ENCODE measurements at regions of chr2 and their contacts with region 1.

Region 1: DNA sequence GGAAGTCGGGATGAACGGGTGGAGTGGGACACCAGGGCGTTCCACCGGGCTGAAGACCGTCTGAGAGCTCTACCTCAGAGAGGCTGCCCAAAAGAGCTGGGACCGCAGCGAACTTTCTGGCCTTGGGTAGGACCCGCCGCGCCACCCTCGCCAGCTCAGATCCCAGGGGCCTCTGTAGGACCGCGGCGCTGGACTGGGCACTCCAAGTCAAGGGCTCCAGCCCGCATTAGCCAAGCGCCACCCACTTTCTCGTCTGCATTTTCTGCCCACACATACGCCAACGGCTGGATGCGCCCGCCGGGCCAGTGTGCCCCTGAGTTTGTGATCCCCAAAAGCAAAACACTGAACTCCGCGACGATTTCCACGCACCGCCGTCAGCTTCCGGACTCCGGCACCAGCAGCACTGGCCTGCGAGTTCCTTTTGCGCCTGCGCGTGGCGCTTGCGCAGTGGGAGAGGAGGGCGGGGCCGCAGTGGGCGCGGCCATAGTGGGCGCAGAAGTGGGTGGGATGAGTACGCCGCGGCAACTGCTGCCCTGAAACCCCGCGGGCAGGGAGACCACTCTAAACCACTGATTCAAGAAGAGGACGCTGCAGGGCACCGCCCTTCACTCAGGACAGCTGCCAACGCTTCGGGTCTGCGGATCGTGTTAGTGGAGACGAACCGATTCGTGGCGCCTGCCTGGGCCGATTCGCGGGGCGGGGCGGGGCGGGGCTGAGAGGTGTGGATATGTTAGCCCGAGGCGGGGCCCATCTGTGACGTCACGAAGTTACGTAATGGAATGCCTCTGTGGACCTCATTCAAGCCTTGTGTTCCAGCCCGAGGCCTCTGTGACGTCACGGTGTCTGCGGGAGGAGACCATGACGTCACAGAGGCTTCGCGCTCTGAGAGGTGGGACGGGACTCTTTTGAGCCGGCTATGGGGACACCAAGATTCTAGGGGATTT is 10.5 kb downstream of the OSR1 start:
- DNase-seq: peak; percentile 98 to 99
- ATAC-seq: peak; percentile 88 to 96 (median 89)
- H3K4me3 ChIP-seq: peak overlapping the region; percentile 79
- H3K4me3 Mint-ChIP-seq: peak overlapping the region; percentile 96
- H3K27ac ChIP-seq: peak overlapping the region; percentile 84
- H3K27ac Mint-ChIP-seq: peak overlapping the region; percentile 95 to 98
- H3K4me1 ChIP-seq: peaks cover 39% of the 10 kb centered on the region
- H3K4me1 Mint-ChIP-seq: peaks cover 17 to 33% of the 10 kb centered on the region in 2 donors
- H3K27me3 ChIP-seq: peaks cover 39% of the 10 kb centered on the region
- H3K27me3 Mint-ChIP-seq: peaks cover 19 to 28% of the 10 kb centered on the region in 2 donors
- CTCF ChIP-seq: no peak

Region 2: GRCh38 chr2:18560031-18560796 is 787.7 kb before region 1 on chr2 and contains the start of gene RDH14:
- intact Hi-C with region 1: loop called (anchors 1 kb)
- DNase-seq: peak; percentile 84 to 94
- ATAC-seq: peak; percentile 88 to 96 (median 89)
- H3K4me3 ChIP-seq: peak within 1 kb of the TSS; percentile 50
- H3K4me3 Mint-ChIP-seq: peak within 1 kb of the TSS; percentile 91
- H3K27ac ChIP-seq: peak within 1 kb of the TSS; percentile 79
- H3K27ac Mint-ChIP-seq: peak within 1 kb of the TSS; percentile 91 to 93
- H3K4me1 ChIP-seq: peaks cover 12% of the 10 kb centered on the region
- H3K4me1 Mint-ChIP-seq: peaks cover 30 to 34% of the 10 kb centered on the region in 2 donors
- H3K27me3 ChIP-seq: no peaks in the 10 kb centered on the region
- H3K27me3 Mint-ChIP-seq: no peaks in the 10 kb centered on the region
- CTCF ChIP-seq: no peak
- total RNA-seq, gene RDH14: 8.7 to 13.5 (median 12.5) TPM

Region 3: GRCh38 chr2:19120941-19121750 is 226.7 kb before region 1 on chr2:
- intact Hi-C with region 1: no loop called
- DNase-seq: no peak
- ATAC-seq: no peak
- H3K4me3 ChIP-seq: no peak overlapping the region
- H3K4me3 Mint-ChIP-seq: no peak overlapping the region
- H3K27ac ChIP-seq: no peak overlapping the region
- H3K27ac Mint-ChIP-seq: no peak overlapping the region
- H3K4me1 ChIP-seq: no peaks in the 10 kb centered on the region
- H3K4me1 Mint-ChIP-seq: no peaks in the 10 kb centered on the region
- H3K27me3 ChIP-seq: no peaks in the 10 kb centered on the region
- H3K27me3 Mint-ChIP-seq: no peaks in the 10 kb centered on the region
- CTCF ChIP-seq: no peak

Region 4: GRCh38 chr2:19137433-19137832 is 210.5 kb before region 1 on chr2:
- intact Hi-C with region 1: no loop called
- DNase-seq: no peak
- ATAC-seq: no peak
- H3K4me3 ChIP-seq: no peak overlapping the region
- H3K4me3 Mint-ChIP-seq: no peak overlapping the region
- H3K27ac ChIP-seq: no peak overlapping the region
- H3K27ac Mint-ChIP-seq: no peak overlapping the region
- H3K4me1 ChIP-seq: no peaks in the 10 kb centered on the region
- H3K4me1 Mint-ChIP-seq: no peaks in the 10 kb centered on the region
- H3K27me3 ChIP-seq: no peaks in the 10 kb centered on the region
- H3K27me3 Mint-ChIP-seq: no peaks in the 10 kb centered on the region
- CTCF ChIP-seq: no peak

Region 5: DNA sequence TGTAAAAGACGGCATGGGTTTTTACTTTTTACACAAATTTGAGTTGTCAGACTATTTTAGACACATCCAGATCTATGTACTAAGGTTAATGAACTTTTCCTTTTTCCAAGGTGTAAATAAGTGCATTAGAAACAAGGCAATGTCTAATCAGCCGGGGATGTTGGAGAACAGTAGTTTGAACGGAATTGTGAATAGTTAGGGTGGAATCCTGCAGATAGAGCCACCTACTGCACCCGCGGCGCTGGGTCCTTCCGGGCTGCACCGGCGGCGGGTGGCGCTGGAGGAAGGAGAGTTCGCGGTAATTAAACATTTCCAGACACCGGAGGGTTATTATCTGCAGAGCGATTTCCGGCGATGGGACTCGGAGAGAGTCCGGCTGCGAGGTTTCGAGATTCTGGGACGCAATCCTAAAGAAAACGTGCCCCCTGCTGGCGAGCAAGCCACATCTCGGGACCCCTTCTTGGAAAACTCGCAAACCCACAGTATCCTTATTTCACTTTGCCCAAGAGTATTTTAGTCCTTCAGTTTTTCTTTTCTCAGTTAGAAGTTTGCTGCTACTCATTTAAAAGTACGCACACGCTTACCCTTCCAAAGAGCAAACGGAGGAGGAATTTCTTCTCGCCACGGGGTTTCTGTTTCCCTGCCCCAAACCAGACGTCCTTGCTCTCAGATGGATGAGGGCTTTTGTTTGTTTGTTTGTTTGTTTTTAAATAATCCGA is 15.0 kb after region 1 on chr2:
- intact Hi-C with region 1: loop called (anchors 1 kb)
- DNase-seq: peak in 1 of 2 donors; percentile 72
- ATAC-seq: peak; percentile 44 to 48 (median 48)
- H3K4me3 ChIP-seq: peak overlapping the region; percentile 46
- H3K4me3 Mint-ChIP-seq: peak overlapping the region; percentile 98
- H3K27ac ChIP-seq: no peak overlapping the region
- H3K27ac Mint-ChIP-seq: peak overlapping the region; percentile 60 to 71
- H3K4me1 ChIP-seq: peaks cover 34% of the 10 kb centered on the region
- H3K4me1 Mint-ChIP-seq: peaks cover 26 to 35% of the 10 kb centered on the region in 2 donors
- H3K27me3 ChIP-seq: peaks cover 35% of the 10 kb centered on the region
- H3K27me3 Mint-ChIP-seq: peaks cover 19 to 28% of the 10 kb centered on the region in 2 donors
- CTCF ChIP-seq: peak; percentile 34

Region 6: GRCh38 chr2:19863303-19864041 is 515.6 kb after region 1 on chr2:
- intact Hi-C with region 1: loop called (anchors 5 kb)
- DNase-seq: peak; percentile 71 to 80
- ATAC-seq: peak; percentile 80 to 97 (median 95)
- H3K4me3 ChIP-seq: no peak overlapping the region
- H3K4me3 Mint-ChIP-seq: no peak overlapping the region
- H3K27ac ChIP-seq: no peak overlapping the region
- H3K27ac Mint-ChIP-seq: no peak overlapping the region
- H3K4me1 ChIP-seq: peaks cover 11% of the 10 kb centered on the region
- H3K4me1 Mint-ChIP-seq: peaks cover 6 to 7% of the 10 kb centered on the region in 2 donors
- H3K27me3 ChIP-seq: no peaks in the 10 kb centered on the region
- H3K27me3 Mint-ChIP-seq: no peaks in the 10 kb centered on the region
- CTCF ChIP-seq: peak; percentile 96

Region 7: DNA sequence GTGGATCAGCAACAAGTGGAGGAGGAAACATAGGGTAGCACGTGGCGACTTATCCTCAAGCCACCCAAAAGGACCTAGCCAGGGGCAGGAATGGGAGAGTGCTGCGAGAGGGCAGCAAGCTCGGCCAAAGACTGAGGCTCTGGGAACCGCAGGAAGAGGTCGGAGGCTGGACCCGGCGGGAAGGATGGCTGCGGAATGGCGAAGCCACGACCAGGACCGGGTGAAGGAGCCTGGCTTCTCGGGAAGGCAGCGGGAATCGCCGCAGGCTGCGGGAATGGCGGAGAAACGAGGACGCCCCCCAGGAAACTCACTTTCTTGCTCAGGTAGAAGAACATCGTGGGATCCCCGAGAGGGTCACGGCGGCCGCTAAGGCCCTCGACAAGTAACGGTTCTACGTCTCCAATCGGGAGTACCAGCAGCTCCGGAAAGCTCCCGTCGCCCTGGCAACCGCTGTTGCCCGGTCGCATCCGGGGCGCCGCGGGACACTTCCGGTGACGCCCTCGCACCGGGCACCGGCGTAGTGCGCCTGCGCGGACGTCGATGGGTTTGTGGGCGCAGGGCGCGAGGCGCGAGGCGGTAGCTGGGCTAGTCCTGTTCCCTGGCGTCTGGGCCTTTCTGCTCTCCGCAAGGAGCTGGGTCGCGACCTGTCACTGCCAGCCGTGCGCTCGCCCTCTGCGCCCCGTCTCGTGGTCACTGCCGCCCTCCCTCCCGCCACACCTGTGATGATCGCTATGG is 642.0 kb after region 1 on chr2 and contains the start of gene WDR35:
- intact Hi-C with region 1: loop called (anchors 5 kb)
- DNase-seq: peak; percentile 92 to 94
- ATAC-seq: peak; percentile 92 to 98 (median 93)
- H3K4me3 ChIP-seq: peak within 1 kb of the TSS; percentile 90
- H3K4me3 Mint-ChIP-seq: peak within 1 kb of the TSS; percentile 95
- H3K27ac ChIP-seq: peak within 1 kb of the TSS; percentile 78
- H3K27ac Mint-ChIP-seq: peak within 1 kb of the TSS; percentile 88 to 89
- H3K4me1 ChIP-seq: peaks cover 13% of the 10 kb centered on the region
- H3K4me1 Mint-ChIP-seq: peaks cover 24 to 36% of the 10 kb centered on the region in 2 donors
- H3K27me3 ChIP-seq: peaks cover 3% of the 10 kb centered on the region
- H3K27me3 Mint-ChIP-seq: peaks cover 16 to 28% of the 10 kb centered on the region in 2 donors
- CTCF ChIP-seq: no peak
- total RNA-seq, gene WDR35: 5.8 to 8.3 (median 7.7) TPM